Mammary epithelial cell (primary cell): ENCODE measurements at regions of chr3 and their contacts with region 1.

Region 1: GRCh38 chr3:196339493-196340254 is 1.5 kb upstream of the TM4SF19 start:
- DNase-seq: peak; percentile 53
- H3K4me3 ChIP-seq: no peak overlapping the region
- H3K27ac ChIP-seq: peak overlapping the region; percentile 61
- H3K4me1 ChIP-seq: peaks cover 35% of the 10 kb centered on the region
- H3K27me3 ChIP-seq: no peaks in the 10 kb centered on the region
- CTCF ChIP-seq: no peak

Region 2: GRCh38 chr3:196081791-196082618 is 257.7 kb before region 1 on chr3 and contains the start of gene TFRC:
- CTCF ChIA-PET with region 1: no interaction called
- dilution Hi-C with region 1: no loop called
- in situ Hi-C with region 1: no loop called
- intact Hi-C with region 1: no loop called
- DNase-seq: peak; percentile 90
- H3K4me3 ChIP-seq: peak within 1 kb of the TSS; percentile 68 to 97 (median 78)
- H3K27ac ChIP-seq: peak within 1 kb of the TSS; percentile 81
- H3K4me1 ChIP-seq: peaks cover 24% of the 10 kb centered on the region
- H3K27me3 ChIP-seq: no peaks in the 10 kb centered on the region
- CTCF ChIP-seq: no peak
- total RNA-seq, gene TFRC: 252 to 547 TPM

Region 3: GRCh38 chr3:196192036-196192523 is 147.6 kb before region 1 on chr3:
- CTCF ChIA-PET with region 1: no interaction called
- dilution Hi-C with region 1: no loop called
- in situ Hi-C with region 1: no loop called
- intact Hi-C with region 1: no loop called
- DNase-seq: no peak
- H3K4me3 ChIP-seq: no peak overlapping the region
- H3K27ac ChIP-seq: no peak overlapping the region
- H3K4me1 ChIP-seq: peaks cover 12% of the 10 kb centered on the region
- H3K27me3 ChIP-seq: no peaks in the 10 kb centered on the region
- CTCF ChIP-seq: no peak

Region 4: GRCh38 chr3:196423044-196423781 is 83.5 kb after region 1 on chr3:
- CTCF ChIA-PET with region 1: no interaction called
- dilution Hi-C with region 1: loop called (anchors 10 kb)
- in situ Hi-C with region 1: no loop called
- intact Hi-C with region 1: no loop called
- DNase-seq: peak; percentile 40
- H3K4me3 ChIP-seq: no peak overlapping the region
- H3K27ac ChIP-seq: no peak overlapping the region
- H3K4me1 ChIP-seq: peaks cover 9% of the 10 kb centered on the region
- H3K27me3 ChIP-seq: no peaks in the 10 kb centered on the region
- CTCF ChIP-seq: no peak

Region 5: GRCh38 chr3:196568246-196569002 is 228.8 kb after region 1 on chr3 and contains the starts of genes FBXO45 and WDR53:
- CTCF ChIA-PET with region 1: no interaction called
- dilution Hi-C with region 1: no loop called
- in situ Hi-C with region 1: no loop called
- intact Hi-C with region 1: no loop called
- DNase-seq: peak; percentile 97
- H3K4me3 ChIP-seq: peak within 1 kb of the TSS; percentile 78 to 94 (median 94)
- H3K27ac ChIP-seq: peak within 1 kb of the TSS; percentile 80
- H3K4me1 ChIP-seq: peaks cover 24% of the 10 kb centered on the region
- H3K27me3 ChIP-seq: no peaks in the 10 kb centered on the region
- CTCF ChIP-seq: no peak
- total RNA-seq, gene FBXO45: 9.2 to 13.5 TPM
- total RNA-seq, gene WDR53: 5.3 to 19.5 TPM